SK-N-SH (cell line): ENCODE measurements at regions of chr16 and their contacts with region 1.

Region 1: GRCh38 chr16:75471723-75472633 is 7.5 kb upstream of the TMEM170A start:
- DNase-seq: peak; percentile 91
- H3K4me3 ChIP-seq: no peak overlapping the region; a peak in 1 of 4 replicates
- H3K27ac ChIP-seq: no peak overlapping the region
- H3K4me1 ChIP-seq: no peaks in the 10 kb centered on the region
- H3K27me3 ChIP-seq: no peaks in the 10 kb centered on the region
- CTCF ChIP-seq: peak; percentile 74
- EP300 ChIP-seq: no peak
- RAD21 ChIP-seq: peak; percentile 92

Region 2: DNA sequence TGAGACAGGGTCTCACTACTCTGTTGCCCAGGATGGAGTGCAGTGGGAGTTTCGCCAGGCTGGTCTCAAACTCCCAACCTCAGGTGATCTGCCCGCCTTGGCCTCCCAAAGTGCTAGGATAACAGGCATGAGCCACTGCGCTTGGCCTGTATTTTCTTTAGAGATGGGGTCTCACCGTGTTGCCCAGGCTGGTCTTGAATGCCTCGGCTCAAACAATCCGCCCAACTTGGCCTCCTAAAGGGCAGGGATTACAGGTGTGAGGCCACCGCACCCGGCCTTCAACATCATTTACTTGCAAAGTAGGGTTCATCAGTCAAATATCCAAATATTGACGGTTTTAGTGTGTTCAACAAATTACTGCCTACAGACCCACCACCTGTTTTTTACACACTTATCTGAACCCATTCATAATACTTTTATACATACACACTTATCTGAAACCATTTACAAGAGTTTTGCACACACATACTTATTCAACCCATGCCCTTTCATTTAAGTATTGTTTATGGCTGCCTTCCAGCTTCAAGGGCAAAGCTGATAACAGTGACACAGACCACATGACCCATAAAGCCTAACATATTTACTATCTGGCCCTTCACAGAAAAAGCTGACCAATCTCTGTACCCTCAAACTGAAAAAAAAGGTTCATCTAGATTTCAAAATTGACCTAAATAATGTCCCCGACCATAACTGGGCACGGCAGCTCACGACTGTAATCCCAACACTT is 19.4 kb before region 1 on chr16:
- CTCF ChIA-PET with region 1: no interaction called
- POLR2A ChIA-PET with region 1: no interaction called
- DNase-seq: peak; percentile 53
- H3K4me3 ChIP-seq: no peak overlapping the region
- H3K27ac ChIP-seq: peak overlapping the region in 1 of 2 experiments; percentile 51; a peak in 2 of 4 replicates
- H3K4me1 ChIP-seq: peaks cover 0 to 26% of the 10 kb centered on the region in 2 experiments; a peak in 2 of 4 replicates
- H3K27me3 ChIP-seq: no peaks in the 10 kb centered on the region
- CTCF ChIP-seq: no peak
- EP300 ChIP-seq: 0 out of 4 replicates have a peak, but pooled peaks of 1 of the 2 experiments have one; percentile 47
- RAD21 ChIP-seq: no peak

Region 3: DNA sequence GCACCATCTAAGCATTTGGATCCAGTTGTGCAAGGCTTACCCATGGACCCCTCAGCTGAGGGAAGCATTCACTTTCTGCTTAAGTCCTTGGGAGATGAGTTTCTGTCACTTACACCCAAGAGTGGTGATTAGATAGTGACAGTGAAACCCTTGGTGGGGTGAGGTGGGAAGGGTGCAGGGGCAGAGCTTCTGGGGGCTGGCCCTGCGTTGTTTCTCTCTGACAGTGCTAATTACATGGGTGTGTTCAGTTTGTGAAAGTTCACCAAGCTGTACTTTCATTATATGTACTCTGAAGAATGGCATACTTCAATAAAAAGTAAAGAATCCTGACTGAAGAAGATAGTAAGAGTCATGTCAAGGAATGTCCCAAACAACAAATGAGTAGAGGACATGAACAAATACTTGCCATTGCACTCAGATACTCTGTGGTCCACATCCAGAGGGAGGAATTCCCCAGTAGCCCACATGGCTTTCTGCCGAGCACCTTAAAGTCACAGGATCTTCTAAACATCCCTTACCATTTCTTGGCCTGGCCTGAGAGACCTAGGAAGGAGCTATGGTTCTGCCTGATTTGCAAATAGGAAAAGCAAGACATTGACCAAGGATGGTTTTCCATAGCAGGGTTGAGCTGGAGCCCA is 14.8 kb after region 1 on chr16:
- CTCF ChIA-PET with region 1: interaction called, 22 read pairs
- POLR2A ChIA-PET with region 1: no interaction called
- DNase-seq: no peak
- H3K4me3 ChIP-seq: no peak overlapping the region
- H3K27ac ChIP-seq: no peak overlapping the region
- H3K4me1 ChIP-seq: peaks cover 0 to 2% of the 10 kb centered on the region in 2 experiments; a peak in 1 of 4 replicates
- H3K27me3 ChIP-seq: no peaks in the 10 kb centered on the region
- CTCF ChIP-seq: no peak
- EP300 ChIP-seq: no peak
- RAD21 ChIP-seq: no peak

Region 4: GRCh38 chr16:75495076-75495674 is 23.2 kb after region 1 on chr16 and contains the start of gene CHST6:
- CTCF ChIA-PET with region 1: interaction called, 22 read pairs
- POLR2A ChIA-PET with region 1: no interaction called
- DNase-seq: peak; percentile 67
- H3K4me3 ChIP-seq: peak within 1 kb of the TSS in 1 of 2 experiments; percentile 37; a peak in 2 of 4 replicates
- H3K27ac ChIP-seq: no peak within 1 kb of the TSS
- H3K4me1 ChIP-seq: peaks cover 7 to 12% of the 10 kb centered on the region in 2 experiments; a peak in 2 of 4 replicates
- H3K27me3 ChIP-seq: no peaks in the 10 kb centered on the region
- CTCF ChIP-seq: no peak
- EP300 ChIP-seq: no peak
- RAD21 ChIP-seq: no peak
- polyA plus RNA-seq, gene CHST6: 0.26 and 0.30 TPM in 2 replicates

Region 5: GRCh38 chr16:75550211-75550662 is 78.3 kb after region 1 on chr16:
- CTCF ChIA-PET with region 1: interaction called, 12 read pairs
- POLR2A ChIA-PET with region 1: no interaction called
- DNase-seq: no peak
- H3K4me3 ChIP-seq: no peak overlapping the region
- H3K27ac ChIP-seq: no peak overlapping the region
- H3K4me1 ChIP-seq: no peaks in the 10 kb centered on the region; a peak in 1 of 4 replicates
- H3K27me3 ChIP-seq: no peaks in the 10 kb centered on the region
- CTCF ChIP-seq: peak; percentile 45; the same call in 1 of the 2 replicates
- EP300 ChIP-seq: no peak
- RAD21 ChIP-seq: peak; percentile 51

Region 6: DNA sequence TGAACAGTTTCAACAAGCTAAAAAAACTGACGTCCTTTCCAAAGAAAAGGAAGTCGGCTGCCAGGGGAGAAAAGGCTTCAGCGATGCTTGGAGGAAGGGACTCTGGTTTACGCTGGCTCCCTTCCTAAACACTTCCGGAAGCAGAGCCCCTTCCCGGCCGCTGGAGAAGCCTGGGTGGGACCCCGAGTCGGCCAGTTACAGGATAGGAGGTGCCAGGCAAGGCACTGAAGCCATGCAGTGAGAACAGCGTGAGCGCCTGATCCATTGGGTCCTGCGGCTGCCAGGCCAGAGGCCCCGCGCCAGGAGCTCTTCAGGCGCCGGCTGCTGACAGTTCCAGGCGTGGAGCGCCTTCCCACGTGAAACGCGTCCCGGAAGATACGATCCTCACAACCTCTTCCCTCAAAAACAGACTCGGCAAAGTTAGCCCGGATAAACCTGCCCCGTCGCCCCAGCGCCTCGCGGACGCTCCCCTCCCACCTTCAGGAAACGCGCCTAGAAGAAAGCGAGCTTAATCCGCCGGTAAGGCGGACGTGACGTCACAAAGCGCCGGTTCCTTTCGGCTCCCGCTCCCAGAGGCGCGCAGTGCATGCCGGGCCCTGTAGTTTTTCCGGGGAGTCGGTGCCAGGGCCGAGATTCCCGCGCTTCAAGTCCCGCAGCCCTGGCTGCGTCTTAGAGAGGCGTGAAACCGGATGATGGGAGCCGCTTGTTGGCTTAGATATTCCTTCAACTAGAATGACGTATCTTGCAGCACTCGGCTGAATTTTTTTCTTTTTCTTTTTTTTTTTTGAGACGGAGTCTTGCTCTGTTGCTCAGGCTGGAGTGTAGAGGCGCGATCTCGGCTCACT is 151.0 kb after region 1 on chr16 and contains the start of gene ADAT1:
- CTCF ChIA-PET with region 1: interaction called, 37 read pairs
- POLR2A ChIA-PET with region 1: no interaction called
- DNase-seq: peak; percentile 90
- H3K4me3 ChIP-seq: peak within 1 kb of the TSS; percentile 85
- H3K27ac ChIP-seq: peak within 1 kb of the TSS; percentile 84 to 89
- H3K4me1 ChIP-seq: peaks cover 6 to 14% of the 10 kb centered on the region in 2 experiments; a peak in 3 of 4 replicates
- H3K27me3 ChIP-seq: no peaks in the 10 kb centered on the region
- CTCF ChIP-seq: no peak
- EP300 ChIP-seq: no peak
- RAD21 ChIP-seq: no peak
- polyA plus RNA-seq, gene ADAT1: 51.1 and 67.7 TPM in 2 replicates

Region 7: GRCh38 chr16:75635036-75635435 is 163.1 kb after region 1 on chr16:
- CTCF ChIA-PET with region 1: no interaction called
- POLR2A ChIA-PET with region 1: no interaction called
- DNase-seq: no peak
- H3K4me3 ChIP-seq: no peak overlapping the region
- H3K27ac ChIP-seq: no peak overlapping the region
- H3K4me1 ChIP-seq: no peaks in the 10 kb centered on the region
- H3K27me3 ChIP-seq: no peaks in the 10 kb centered on the region
- CTCF ChIP-seq: no peak
- EP300 ChIP-seq: no peak
- RAD21 ChIP-seq: no peak

Region 8: GRCh38 chr16:75764154-75764768 is 292.3 kb after region 1 on chr16:
- CTCF ChIA-PET with region 1: interaction called, 17 read pairs
- POLR2A ChIA-PET with region 1: no interaction called
- DNase-seq: peak; percentile 74
- H3K4me3 ChIP-seq: peak overlapping the region in 1 of 2 experiments; percentile 17; a peak in 1 of 4 replicates
- H3K27ac ChIP-seq: no peak overlapping the region
- H3K4me1 ChIP-seq: no peaks in the 10 kb centered on the region
- H3K27me3 ChIP-seq: no peaks in the 10 kb centered on the region
- CTCF ChIP-seq: peak; percentile 78
- EP300 ChIP-seq: no peak
- RAD21 ChIP-seq: peak; percentile 97